Psoas muscle (tissue), 8 donors: ENCODE measurements at regions of chr12 and their contacts with region 1.

Region 1: DNA sequence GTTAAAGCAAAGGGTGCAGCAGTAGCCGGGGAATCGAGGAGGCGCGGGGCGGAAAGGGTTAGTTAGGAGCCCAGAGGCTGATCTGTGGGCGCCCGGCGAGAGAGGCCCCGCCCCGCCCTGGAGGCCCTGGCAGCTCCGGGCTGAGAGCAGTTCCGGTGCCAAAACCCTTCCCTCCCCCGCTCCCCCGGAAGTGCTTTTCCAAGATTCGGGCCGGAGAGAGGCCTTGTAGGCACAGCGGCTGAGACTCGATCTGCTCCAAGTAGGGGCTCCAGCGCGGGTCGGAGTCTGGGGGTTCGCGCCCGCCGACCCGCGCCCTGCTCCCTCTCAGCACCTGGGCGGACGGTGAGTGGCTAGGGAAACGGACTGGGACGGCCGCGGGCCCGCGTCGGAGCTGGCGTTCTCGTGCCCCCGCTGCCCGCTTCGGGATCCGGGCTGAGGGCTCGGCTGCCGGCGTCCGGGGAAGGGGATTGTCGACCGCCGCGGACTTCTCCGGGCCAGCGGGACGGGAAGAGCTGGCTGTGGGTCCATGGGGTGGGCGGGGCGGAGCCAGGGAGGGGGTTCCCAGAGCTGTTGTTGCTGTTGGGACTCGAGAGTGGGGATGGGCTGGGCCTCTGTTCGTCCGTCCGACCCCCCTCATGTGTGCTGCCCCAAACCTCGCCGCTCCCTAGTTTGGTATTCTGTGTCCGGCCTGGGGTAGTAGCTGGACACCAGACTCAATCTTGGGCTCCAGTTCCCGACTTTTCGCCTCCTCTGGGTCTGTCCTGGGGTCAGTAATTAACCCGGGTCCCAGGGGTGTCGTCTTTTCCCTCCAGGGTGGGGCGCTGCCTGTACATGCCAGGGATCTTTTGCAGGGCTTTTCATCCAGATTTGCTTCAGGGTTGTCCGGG is at the start of gene FRS2:
- DNase-seq: peak; percentile 92 to 95
- ATAC-seq: peak; percentile 99
- H3K4me3 ChIP-seq: peak within 1 kb of the TSS; percentile 71
- H3K27ac ChIP-seq: peak within 1 kb of the TSS; percentile 84
- H3K4me1 ChIP-seq: peaks cover 38% of the 10 kb centered on the region
- H3K27me3 ChIP-seq: no peaks in the 10 kb centered on the region
- CTCF ChIP-seq: peak; percentile 10
- total RNA-seq, gene FRS2: 12.8 to 18.9 (median 15.0) TPM

Region 2: GRCh38 chr12:69423037-69423907 is 47.2 kb before region 1 on chr12:
- intact Hi-C with region 1: loop called in 1 of 2 experiments (anchors 5 kb)
- DNase-seq: no peak
- ATAC-seq: no peak
- H3K4me3 ChIP-seq: no peak overlapping the region
- H3K27ac ChIP-seq: no peak overlapping the region
- H3K4me1 ChIP-seq: no peaks in the 10 kb centered on the region
- H3K27me3 ChIP-seq: no peaks in the 10 kb centered on the region
- CTCF ChIP-seq: no peak

Region 3: DNA sequence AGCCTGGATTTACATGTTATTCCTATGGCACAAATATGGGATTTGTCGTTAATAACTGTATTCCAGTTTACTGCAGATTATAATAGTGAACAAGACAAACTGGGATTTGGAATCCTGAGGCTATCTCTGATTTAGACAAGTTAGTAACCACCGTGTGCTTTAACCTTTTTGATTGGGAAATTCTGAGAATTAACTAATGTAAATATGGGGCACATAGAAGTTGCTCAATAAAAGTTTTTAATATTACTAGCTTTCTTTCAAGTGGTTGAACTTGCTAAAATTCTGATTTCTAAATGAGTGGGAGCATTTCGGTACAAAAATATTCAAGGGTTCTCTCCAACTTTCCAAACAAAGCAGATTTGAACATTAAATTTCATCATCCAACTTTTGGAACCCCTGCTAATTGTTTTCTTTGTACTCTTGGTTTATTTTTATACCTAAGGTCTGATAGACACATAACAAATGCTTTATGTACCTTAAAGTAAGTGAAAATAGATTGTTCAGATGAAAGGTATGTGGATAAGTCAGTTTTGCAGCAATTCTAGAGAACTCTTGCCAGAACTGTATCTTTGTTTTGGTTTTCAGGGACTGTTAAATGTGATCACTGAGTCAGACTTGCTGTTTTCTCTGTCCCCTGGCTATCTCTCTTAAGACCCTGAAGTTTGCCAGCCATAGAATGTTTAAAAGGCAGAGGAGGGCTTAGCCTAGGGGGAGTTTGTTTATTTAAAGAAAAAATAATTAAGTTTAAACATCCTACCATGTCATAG is 57.3 kb after region 1 on chr12:
- intact Hi-C with region 1: loop called in 1 of 2 experiments (anchors 10 kb)
- DNase-seq: no peak
- ATAC-seq: no peak
- H3K4me3 ChIP-seq: no peak overlapping the region
- H3K27ac ChIP-seq: no peak overlapping the region
- H3K4me1 ChIP-seq: peaks cover 7% of the 10 kb centered on the region
- H3K27me3 ChIP-seq: no peaks in the 10 kb centered on the region
- CTCF ChIP-seq: no peak